Cardiac septum (tissue), 1 donor: ENCODE measurements at regions of chr17 and their contacts with region 1.

Region 1: GRCh38 chr17:13253733-13254410 is 236.0 kb upstream of the ELAC2 start:
- DNase-seq: no peak

Region 2: GRCh38 chr17:13302983-13303382 is 49.1 kb after region 1 on chr17:
- intact Hi-C with region 1: loop called (anchors 5 kb)
- DNase-seq: no peak